ENCODE measurements at regions of chrX and their contacts with region 1.

Region 1: GRCh38 chrX:103464774-103465117 is 54.5 kb downstream of the RAB40A start:
- DNase-seq: peak; percentile 5 to 29
- ATAC-seq: peak; percentile 52 to 64
- H3K4me3 ChIP-seq: peak overlapping the region in 2 of 4 donors; percentile 19 to 26
- H3K27ac ChIP-seq: no peak overlapping the region
- H3K4me1 ChIP-seq: no peaks in the 10 kb centered on the region
- H3K27me3 ChIP-seq: no peaks in the 10 kb centered on the region
- CTCF ChIP-seq: peak in 4 of 5 experiments; percentile 18 to 60 (median 43)
- POLR2A ChIP-seq: no peak

Region 2: DNA sequence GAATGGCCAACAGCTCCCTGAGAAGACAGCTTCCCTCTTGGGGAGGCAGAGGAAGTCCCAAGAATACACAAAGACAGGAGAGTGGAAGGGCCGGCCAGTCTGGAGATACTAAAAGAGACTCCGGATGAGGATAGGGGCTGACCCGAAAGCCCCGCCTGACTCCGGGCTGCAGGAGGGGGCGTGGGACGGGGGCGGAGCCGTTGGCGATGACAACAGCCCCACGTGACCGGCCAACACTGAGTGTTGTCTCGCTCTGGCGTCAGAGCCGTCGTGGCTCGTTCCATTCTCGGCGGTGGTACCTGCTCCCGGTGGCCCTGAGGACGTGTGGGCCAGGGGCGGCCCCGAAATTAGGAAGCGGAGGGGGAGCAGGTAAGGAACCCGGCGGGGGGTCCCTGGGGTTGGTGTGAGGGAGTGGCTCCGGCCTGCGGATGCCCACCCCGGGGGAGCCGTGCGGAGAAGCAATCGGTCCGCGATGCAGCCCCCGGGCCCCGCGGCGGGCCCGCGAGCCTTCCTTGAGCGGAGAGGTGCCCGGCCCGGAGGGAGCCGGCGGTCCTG is 249.8 kb before region 1 on chrX and contains the start of gene BEX4:
- in situ Hi-C with region 1: loop called in 1 of 4 experiments (anchors 25 kb)
- intact Hi-C with region 1: loop called (anchors 2 kb)
- DNase-seq: peak; percentile 47 to 55
- ATAC-seq: peak; percentile 56 to 70
- H3K4me3 ChIP-seq: peak within 1 kb of the TSS; percentile 47 to 56 (median 54)
- H3K27ac ChIP-seq: peak within 1 kb of the TSS; percentile 37 to 66 (median 54)
- H3K4me1 ChIP-seq: no peaks in the 10 kb centered on the region
- H3K27me3 ChIP-seq: peaks cover 0 to 21% (median 0%) of the 10 kb centered on the region in 3 donors
- CTCF ChIP-seq: no peak
- POLR2A ChIP-seq: peak; percentile 49 to 68
- total RNA-seq, gene BEX4: 0.36 to 6.6 (median 5.0) TPM

Region 3: DNA sequence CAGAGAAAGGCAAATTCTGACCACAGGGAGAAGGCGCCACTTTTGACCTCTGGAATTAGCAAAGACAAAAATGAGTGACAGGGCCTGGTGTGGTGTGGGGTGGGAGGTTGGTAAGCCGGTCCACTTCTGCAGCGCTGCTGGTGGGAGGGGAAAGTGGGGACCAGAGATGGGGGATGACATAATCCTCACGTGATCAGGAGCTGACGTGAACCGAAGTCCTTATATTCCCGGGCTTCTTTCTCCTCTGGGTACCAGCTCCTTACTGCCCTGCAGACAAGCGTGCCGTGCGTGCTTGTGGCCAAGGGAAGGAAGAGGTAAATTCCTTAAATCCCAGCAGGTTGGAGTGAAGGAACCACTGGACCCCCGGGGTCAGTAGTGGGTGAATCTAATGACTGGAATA is 134.8 kb before region 1 on chrX and contains the start of gene TCEAL7:
- in situ Hi-C with region 1: loop called in 3 of 4 experiments (anchors 10 to 25 kb)
- intact Hi-C with region 1: no loop called
- DNase-seq: no peak
- ATAC-seq: peak in 1 of 2 donors; percentile 54
- H3K4me3 ChIP-seq: peak within 1 kb of the TSS; percentile 17 to 28 (median 24)
- H3K27ac ChIP-seq: no peak within 1 kb of the TSS
- H3K4me1 ChIP-seq: no peaks in the 10 kb centered on the region
- H3K27me3 ChIP-seq: peaks cover 0 to 5% (median 0%) of the 10 kb centered on the region in 3 donors
- CTCF ChIP-seq: no peak
- POLR2A ChIP-seq: no peak
- total RNA-seq, gene TCEAL7: 1.1 to 1.9 (median 1.7) TPM in 3 of 4 donors, not detected in the other

Region 4: GRCh38 chrX:103343105-103343504 is 121.6 kb before region 1 on chrX:
- in situ Hi-C with region 1: loop called in 3 of 4 experiments (anchors 10 to 25 kb)
- intact Hi-C with region 1: loop called (anchors 1 kb)
- DNase-seq: no peak
- ATAC-seq: no peak
- H3K4me3 ChIP-seq: no peak overlapping the region
- H3K27ac ChIP-seq: no peak overlapping the region
- H3K4me1 ChIP-seq: no peaks in the 10 kb centered on the region
- H3K27me3 ChIP-seq: peaks cover 0 to 10% (median 0%) of the 10 kb centered on the region in 3 donors
- CTCF ChIP-seq: peak in 4 of 5 experiments; percentile 33 to 46 (median 38)
- POLR2A ChIP-seq: no peak